ENCODE measurements at regions of chr18 and their contacts with region 1.

Region 1: DNA sequence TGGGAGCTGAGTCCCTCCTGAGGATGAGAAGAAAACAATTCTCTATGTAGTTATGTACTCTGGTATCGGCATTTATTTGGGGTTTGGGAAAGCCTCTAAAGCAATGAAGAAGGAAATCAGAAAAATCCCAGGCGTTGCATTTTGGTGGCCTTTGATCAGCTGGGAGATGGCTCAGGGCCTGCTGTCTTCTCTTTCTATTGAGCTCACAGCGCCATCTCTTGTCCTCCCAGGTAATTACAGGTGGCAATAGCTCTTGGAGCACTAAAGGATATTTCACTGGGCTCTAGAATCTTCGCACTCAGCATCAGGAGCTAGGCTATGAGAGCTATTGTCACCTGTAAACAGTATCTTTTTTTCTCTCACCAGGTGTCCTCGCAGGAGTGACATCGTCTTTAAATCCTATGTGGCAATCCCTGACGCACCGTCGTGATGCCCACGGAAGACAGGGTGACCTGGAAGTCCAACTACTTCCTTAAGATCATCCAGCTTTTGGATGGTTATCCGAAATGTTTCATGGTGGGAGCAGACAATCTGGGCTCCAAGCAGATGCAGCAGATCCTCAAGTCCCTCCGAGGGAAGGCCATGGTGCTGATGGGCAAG is 76.1 kb upstream of the PMAIP1 start:
- DNase-seq: no peak
- ATAC-seq: peak; percentile 28
- H3K4me3 Mint-ChIP-seq: no peak overlapping the region
- H3K27ac Mint-ChIP-seq: no peak overlapping the region
- H3K4me1 Mint-ChIP-seq: no peaks in the 10 kb centered on the region
- H3K27me3 Mint-ChIP-seq: peaks cover 4% of the 10 kb centered on the region
- CTCF ChIP-seq: no peak

Region 2: DNA sequence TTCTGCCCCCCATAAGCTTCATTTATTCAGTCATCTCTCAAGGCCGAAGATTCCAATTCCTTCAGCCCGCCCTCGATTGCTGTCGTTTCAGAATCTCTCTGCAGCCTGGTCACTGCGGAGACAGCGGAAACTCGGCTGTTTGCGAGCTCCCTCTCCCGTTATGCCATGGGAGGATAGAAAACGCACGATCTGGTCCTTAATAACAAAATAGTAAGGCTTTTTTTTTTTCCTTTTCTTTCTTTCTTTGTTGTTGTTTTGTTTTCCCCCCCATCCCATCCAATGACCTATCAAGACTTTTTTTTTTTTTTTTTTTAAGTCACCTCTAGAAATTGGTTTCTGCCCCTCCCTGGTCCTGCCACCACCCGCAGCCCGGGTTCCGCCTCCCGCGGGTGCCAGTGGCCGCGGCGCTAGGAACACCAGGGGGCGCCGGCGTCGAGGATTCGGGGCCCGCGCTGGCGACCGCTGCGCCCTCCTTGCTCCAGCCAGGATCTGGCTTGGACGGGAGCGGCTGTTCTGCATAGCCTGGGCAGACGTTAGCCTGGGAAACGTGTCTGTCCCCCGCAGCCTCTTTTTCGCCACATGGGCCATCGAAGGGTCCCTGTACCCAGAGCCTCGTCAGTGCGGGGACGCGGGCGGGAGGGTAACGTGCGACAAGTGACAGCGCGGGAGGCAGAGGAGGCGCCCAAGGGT is 515.3 kb before region 1 on chr18:
- CTCF ChIA-PET with region 1: no interaction called
- POLR2A ChIA-PET with region 1: no interaction called
- intact Hi-C with region 1: loop called (anchors 5 kb)
- DNase-seq: peak; percentile 66
- ATAC-seq: peak; percentile 85
- H3K4me3 Mint-ChIP-seq: peak overlapping the region; percentile 52
- H3K27ac Mint-ChIP-seq: no peak overlapping the region
- H3K4me1 Mint-ChIP-seq: peaks cover 6% of the 10 kb centered on the region
- H3K27me3 Mint-ChIP-seq: peaks cover 31% of the 10 kb centered on the region
- CTCF ChIP-seq: no peak

Region 3: GRCh38 chr18:59423259-59423658 is 400.4 kb before region 1 on chr18:
- CTCF ChIA-PET with region 1: no interaction called
- POLR2A ChIA-PET with region 1: no interaction called
- intact Hi-C with region 1: no loop called
- DNase-seq: no peak
- ATAC-seq: no peak
- H3K4me3 Mint-ChIP-seq: no peak overlapping the region
- H3K27ac Mint-ChIP-seq: no peak overlapping the region
- H3K4me1 Mint-ChIP-seq: no peaks in the 10 kb centered on the region
- H3K27me3 Mint-ChIP-seq: peaks cover 23% of the 10 kb centered on the region
- CTCF ChIP-seq: no peak

Region 4: GRCh38 chr18:59783138-59783537 is 40.6 kb before region 1 on chr18:
- CTCF ChIA-PET with region 1: interaction called, 7 read pairs
- POLR2A ChIA-PET with region 1: no interaction called
- intact Hi-C with region 1: loop called (anchors 1 kb)
- DNase-seq: no peak
- ATAC-seq: no peak
- H3K4me3 Mint-ChIP-seq: no peak overlapping the region
- H3K27ac Mint-ChIP-seq: no peak overlapping the region
- H3K4me1 Mint-ChIP-seq: no peaks in the 10 kb centered on the region
- H3K27me3 Mint-ChIP-seq: peaks cover 5% of the 10 kb centered on the region
- CTCF ChIP-seq: no peak

Region 5: DNA sequence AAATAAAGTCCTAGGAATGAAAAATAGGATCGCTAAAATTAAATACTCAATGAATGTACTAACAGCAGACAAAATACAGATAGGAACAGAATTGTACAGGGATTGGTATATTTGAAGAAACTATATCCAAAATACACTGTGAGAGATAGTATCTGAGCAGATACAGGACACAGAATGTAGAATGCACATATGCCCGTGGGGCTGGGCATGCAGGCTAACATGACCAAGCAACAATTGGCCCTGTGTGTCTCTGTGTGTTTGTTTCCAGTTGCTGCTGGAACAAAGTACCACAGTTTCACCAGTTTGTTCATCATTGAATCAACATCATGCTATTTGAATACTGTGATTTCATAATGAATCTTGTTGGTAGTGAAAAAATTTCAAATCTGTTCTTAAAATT is 203.7 kb after region 1 on chr18:
- CTCF ChIA-PET with region 1: no interaction called
- POLR2A ChIA-PET with region 1: no interaction called
- intact Hi-C with region 1: no loop called
- DNase-seq: no peak
- ATAC-seq: no peak
- H3K4me3 Mint-ChIP-seq: no peak overlapping the region
- H3K27ac Mint-ChIP-seq: no peak overlapping the region
- H3K4me1 Mint-ChIP-seq: no peaks in the 10 kb centered on the region
- H3K27me3 Mint-ChIP-seq: peaks cover 8% of the 10 kb centered on the region
- CTCF ChIP-seq: no peak

Region 6: DNA sequence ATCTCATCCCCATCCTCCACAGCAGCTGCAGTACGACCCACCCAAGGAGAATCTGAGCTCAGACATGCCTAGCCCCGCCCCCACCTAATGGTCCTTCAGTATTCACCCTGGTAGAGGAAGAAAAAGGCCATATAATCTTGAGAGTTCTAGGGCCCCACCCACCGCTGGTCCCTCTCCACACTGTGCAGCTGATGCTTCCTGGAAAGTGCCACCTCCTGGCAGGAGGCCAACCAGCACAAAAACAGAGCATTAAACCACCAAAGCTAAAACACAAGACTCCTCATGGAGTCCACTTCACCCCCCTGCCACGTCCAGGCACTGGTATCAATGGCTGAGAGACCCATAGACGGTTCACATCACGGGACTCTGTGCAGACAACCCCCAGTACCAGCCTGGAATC is 508.2 kb after region 1 on chr18:
- CTCF ChIA-PET with region 1: no interaction called
- POLR2A ChIA-PET with region 1: no interaction called
- intact Hi-C with region 1: no loop called
- DNase-seq: no peak
- ATAC-seq: no peak
- H3K4me3 Mint-ChIP-seq: no peak overlapping the region
- H3K27ac Mint-ChIP-seq: no peak overlapping the region
- H3K4me1 Mint-ChIP-seq: no peaks in the 10 kb centered on the region
- H3K27me3 Mint-ChIP-seq: no peaks in the 10 kb centered on the region
- CTCF ChIP-seq: no peak

Measured in activated B cell treated with CpG ODN at 0.5 μM for 24 hours (primary cell).